Calu3 (cell line): ENCODE measurements at regions of chr9 and their contacts with region 1.

Region 1: DNA sequence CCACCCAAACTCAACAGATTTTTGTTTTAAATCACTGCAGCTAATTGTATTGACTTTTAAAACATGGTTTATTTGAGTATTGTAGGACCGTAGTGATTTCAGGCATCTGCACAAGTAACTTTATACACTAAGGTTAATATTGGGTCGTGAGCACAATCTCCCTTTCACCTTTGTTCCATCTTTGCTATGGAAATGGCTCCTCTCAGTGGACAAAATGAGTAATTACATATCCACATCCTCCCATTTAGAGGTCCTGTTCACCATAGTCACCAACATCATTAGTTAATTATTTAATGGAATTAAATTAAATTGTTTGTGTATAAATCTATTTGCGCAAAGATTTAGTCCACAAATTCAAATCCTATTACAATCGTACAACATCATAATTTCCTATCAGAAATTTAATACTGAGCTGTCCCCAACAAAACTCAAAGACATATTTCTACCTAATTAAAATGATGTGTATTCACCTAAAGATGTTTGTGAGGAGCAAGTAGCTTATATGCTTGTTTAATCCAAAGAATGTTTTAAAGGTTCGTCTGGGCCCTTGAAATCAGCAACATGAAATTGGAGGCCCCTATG is 173.0 kb upstream of the DAPK1 start:
- DNase-seq: no peak
- H3K4me3 Mint-ChIP-seq: no peak overlapping the region
- H3K27ac Mint-ChIP-seq: no peak overlapping the region
- H3K4me1 Mint-ChIP-seq: peaks cover 8% of the 10 kb centered on the region
- H3K27me3 Mint-ChIP-seq: peaks cover 34% of the 10 kb centered on the region
- CTCF ChIP-seq: peak; percentile 58

Region 2: DNA sequence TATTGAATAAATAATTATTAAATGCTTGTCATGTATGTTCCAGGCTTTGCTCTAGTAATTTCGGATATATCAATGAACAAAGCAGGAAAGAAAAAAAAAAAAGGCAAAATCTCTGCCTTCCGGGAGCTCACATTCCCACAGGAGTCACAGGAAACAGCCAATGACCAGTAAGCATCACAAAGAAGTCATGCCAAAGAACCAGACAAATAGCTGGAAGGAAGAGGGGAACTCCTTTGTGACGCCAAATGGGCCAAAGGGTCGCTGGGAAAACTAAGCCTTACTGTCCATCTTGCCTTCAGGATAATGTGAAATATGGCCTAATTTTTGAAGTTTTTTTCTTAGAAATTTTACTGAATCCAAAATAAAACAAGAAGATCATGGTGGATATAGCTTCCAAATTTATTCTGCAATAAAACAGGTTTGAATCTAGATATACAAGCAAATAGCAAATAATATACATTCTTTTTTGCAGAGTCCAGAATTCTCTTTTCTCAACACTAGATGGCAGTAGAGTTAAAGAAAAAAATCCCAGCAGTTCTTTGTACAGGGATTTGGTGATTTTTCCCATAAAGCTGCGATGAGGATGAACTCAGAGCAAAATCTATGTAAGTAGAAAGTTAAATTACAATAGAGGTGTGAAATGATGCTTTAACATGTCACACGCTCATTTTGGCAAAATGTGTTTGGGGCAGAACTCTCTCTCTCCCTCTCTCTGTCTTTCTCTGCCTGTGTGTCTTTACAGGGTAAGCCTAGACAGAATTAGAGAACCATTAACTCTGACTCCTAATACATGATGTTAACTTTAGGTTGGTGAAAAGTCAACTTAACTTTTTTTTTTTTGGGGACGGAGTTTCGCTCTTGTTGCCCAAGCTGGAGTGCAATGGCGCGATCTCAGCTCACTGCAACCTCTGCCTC is 910.5 kb before region 1 on chr9:
- CTCF ChIA-PET with region 1: interaction called, 4 read pairs
- intact Hi-C with region 1: loop called (anchors 2 kb)
- DNase-seq: no peak
- H3K4me3 Mint-ChIP-seq: no peak overlapping the region
- H3K27ac Mint-ChIP-seq: no peak overlapping the region
- H3K4me1 Mint-ChIP-seq: no peaks in the 10 kb centered on the region
- H3K27me3 Mint-ChIP-seq: peaks cover 13% of the 10 kb centered on the region
- CTCF ChIP-seq: peak; percentile 36

Region 3: DNA sequence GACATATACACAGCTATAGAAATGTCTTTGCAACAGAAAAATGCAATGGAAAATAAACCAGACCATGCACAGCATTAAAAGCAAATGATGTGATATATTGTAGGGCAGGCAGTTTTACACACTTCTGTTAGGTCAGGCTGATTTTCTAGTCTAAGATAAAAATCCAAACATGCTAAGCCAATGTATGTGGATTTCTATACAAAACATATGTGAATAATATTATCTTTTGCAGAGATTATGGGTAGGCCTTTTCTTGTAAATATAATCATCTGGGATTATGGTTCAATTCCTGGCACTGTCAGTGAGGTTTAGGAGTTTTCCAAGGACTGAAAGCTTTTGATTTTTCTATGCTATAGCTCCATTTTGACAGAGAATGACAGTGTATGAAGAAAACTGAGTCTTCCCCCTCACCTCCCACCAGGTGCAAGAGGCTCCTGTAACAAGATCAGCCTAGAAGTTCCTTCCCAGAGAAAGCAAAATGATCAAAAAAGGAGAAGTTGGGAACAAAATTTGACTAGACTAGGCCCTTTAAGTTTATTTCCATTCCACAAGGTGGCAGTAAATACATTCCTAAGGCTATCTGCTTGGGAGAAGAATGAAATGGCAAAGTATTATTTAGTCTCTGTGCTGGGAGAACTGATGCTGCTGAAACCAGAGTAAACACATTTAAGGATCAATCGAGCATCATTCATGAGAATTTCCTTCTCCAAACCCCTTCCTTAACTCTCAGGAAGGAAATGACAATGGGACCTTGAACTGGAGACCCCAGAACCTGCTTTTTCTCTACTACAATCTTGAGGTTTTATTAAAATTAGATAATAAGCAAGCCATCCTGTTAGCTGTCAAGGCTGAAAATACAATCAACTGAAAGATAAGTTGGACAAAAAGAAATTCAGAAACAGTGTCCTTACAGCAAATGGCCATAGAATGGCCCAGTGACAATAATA is 837.5 kb before region 1 on chr9:
- CTCF ChIA-PET with region 1: no interaction called
- intact Hi-C with region 1: loop called (anchors 1 kb)
- DNase-seq: no peak
- H3K4me3 Mint-ChIP-seq: no peak overlapping the region
- H3K27ac Mint-ChIP-seq: no peak overlapping the region
- H3K4me1 Mint-ChIP-seq: peaks cover 25% of the 10 kb centered on the region
- H3K27me3 Mint-ChIP-seq: no peaks in the 10 kb centered on the region
- CTCF ChIP-seq: no peak

Region 4: GRCh38 chr9:86948074-86948929 is 376.4 kb before region 1 on chr9:
- CTCF ChIA-PET with region 1: no interaction called
- intact Hi-C with region 1: loop called (anchors 5 kb)
- DNase-seq: peak; percentile 70
- H3K4me3 Mint-ChIP-seq: peak overlapping the region; percentile 69
- H3K27ac Mint-ChIP-seq: no peak overlapping the region
- H3K4me1 Mint-ChIP-seq: no peaks in the 10 kb centered on the region
- H3K27me3 Mint-ChIP-seq: peaks cover 53% of the 10 kb centered on the region
- CTCF ChIP-seq: peak; percentile 59

Region 5: DNA sequence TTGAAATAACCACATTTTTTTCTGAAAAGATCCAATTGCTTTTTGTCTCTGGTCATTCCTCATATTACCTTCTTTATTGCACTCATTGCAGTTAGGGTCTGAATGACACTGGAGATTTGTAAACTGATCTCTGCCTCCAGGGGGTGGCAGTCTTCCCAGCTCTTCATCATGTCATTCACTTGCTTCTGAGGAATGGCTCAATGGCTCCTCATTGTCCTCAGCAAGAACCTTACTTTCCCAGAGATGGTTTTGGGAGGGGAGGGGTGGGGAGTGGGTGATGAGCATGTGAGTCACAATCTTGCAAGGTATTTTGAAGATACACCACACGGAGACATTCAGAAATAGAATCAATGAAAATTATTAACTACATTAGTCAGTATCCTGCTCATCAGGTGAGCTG is 217.6 kb before region 1 on chr9:
- CTCF ChIA-PET with region 1: interaction called, 5 read pairs
- intact Hi-C with region 1: loop called (anchors 5 kb)
- DNase-seq: no peak
- H3K4me3 Mint-ChIP-seq: no peak overlapping the region
- H3K27ac Mint-ChIP-seq: no peak overlapping the region
- H3K4me1 Mint-ChIP-seq: no peaks in the 10 kb centered on the region
- H3K27me3 Mint-ChIP-seq: peaks cover 58% of the 10 kb centered on the region
- CTCF ChIP-seq: no peak